PC-9 (cell line): ENCODE measurements at regions of chr15 and their contacts with region 1.

Region 1: GRCh38 chr15:60423537-60423936 is 25.8 kb upstream of the ANXA2 start:
- DNase-seq: peak; percentile 60 to 84
- H3K4me3 ChIP-seq: no peak overlapping the region
- H3K27ac ChIP-seq: peak overlapping the region; percentile 55
- H3K4me1 ChIP-seq: peaks cover 20% of the 10 kb centered on the region
- H3K27me3 ChIP-seq: no peaks in the 10 kb centered on the region
- CTCF ChIP-seq: no peak

Region 2: DNA sequence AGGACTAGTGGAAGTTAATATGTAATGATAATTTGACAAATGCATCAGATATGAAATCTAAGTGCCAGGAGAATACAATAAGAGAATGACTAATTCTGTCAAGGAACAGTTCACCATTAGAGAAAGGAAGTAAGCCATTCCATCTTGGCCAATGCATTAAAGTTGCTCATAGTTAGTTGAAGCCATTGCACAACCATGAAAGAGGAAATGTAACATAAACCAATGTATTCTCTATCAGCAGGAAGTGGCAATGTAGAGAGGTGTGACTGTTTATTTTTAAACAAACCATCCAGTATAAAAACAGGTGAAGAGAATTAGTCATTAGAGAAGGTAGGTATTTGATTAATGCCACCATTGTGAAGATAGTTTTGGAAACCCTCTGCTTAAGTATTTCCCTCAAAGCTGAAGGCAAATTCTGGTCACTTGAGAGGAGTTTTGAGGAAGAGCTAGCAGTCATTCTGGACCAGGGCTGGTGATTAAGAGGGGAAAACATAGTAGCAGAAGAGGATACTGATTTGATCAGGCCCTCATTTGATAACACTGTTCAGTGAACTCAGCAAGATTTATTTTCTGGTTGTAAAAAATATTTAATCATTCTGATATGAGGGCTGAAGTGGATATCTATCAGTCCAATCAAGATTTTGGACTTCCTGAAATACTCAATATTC is 15.0 kb before region 1 on chr15:
- CTCF ChIA-PET with region 1: no interaction called
- POLR2A ChIA-PET with region 1: interaction called, 5 read pairs
- intact Hi-C with region 1: loop called (anchors 1 kb)
- DNase-seq: peak in 1 of 2 experiments; percentile 92
- H3K4me3 ChIP-seq: no peak overlapping the region
- H3K27ac ChIP-seq: peak overlapping the region; percentile 90
- H3K4me1 ChIP-seq: peaks cover 39% of the 10 kb centered on the region
- H3K27me3 ChIP-seq: no peaks in the 10 kb centered on the region
- CTCF ChIP-seq: no peak

Region 3: DNA sequence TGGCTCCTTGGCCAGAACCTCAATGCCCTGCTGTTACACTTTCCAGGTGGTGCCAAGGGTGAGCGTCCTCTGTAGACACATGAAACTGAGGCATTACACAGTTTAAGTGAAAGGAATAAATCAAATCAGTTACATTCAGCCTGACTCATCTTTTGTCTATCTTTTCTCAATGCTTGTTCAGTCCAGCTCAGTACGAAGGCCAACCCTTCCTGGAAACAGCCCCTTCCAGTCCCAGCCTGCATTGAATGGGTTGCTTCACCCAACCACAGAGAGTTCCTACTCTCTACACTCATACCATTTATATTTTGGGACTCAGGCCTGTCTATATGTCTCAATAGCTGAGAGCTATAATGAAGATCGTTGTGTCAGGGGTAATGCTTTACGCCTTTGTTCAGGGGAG is 442.0 kb after region 1 on chr15:
- CTCF ChIA-PET with region 1: no interaction called
- POLR2A ChIA-PET with region 1: no interaction called
- intact Hi-C with region 1: no loop called
- DNase-seq: no peak
- H3K4me3 ChIP-seq: no peak overlapping the region
- H3K27ac ChIP-seq: no peak overlapping the region
- H3K4me1 ChIP-seq: no peaks in the 10 kb centered on the region
- H3K27me3 ChIP-seq: no peaks in the 10 kb centered on the region
- CTCF ChIP-seq: no peak